HAP-1 (cell line): ENCODE measurements at regions of chr10 and their contacts with region 1.

Region 1: DNA sequence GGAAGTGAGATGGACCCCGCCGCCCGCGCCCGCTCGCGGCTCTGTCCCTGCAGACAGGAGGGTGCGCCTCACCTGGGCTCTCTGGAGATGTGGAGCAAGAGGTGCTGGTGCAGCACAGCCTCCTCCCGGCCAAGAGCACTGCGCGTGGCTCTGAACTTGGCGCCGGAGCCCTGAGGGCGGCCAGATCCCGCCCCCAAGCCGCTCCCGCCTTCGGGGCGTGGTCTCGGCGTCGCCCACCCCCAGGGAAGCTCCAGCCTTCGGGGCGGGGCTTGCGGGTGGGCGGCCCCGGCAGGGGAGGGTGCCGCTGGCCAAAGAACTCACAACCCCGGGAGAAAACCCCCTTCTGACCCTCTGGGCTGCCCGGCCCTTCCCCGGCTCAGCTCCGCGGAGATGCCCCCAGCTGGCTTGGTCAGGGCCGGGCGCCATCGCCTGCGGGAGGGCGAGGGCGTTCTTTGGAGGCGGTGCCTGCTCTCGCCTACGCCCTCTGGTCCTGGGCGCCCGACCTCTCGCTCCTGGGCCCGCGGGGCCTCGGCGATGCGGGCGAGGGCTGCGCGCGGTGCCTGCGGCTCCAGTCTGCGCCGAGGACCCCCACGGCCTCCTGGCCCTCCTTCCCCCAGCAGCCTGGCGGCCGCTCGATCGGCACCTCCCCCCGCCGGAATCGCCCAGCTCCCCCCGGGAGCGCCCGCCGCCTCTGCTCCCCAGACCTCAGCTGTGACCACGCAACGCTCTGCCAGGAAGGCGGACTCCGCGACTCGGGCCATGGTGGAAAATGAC is at the start of gene ZNF488:
- DNase-seq: peak; percentile 58 to 85
- H3K4me3 ChIP-seq: peak within 1 kb of the TSS; percentile 49
- H3K4me1 ChIP-seq: no peaks in the 10 kb centered on the region
- H3K27me3 ChIP-seq: peaks cover 4% of the 10 kb centered on the region

Region 2: DNA sequence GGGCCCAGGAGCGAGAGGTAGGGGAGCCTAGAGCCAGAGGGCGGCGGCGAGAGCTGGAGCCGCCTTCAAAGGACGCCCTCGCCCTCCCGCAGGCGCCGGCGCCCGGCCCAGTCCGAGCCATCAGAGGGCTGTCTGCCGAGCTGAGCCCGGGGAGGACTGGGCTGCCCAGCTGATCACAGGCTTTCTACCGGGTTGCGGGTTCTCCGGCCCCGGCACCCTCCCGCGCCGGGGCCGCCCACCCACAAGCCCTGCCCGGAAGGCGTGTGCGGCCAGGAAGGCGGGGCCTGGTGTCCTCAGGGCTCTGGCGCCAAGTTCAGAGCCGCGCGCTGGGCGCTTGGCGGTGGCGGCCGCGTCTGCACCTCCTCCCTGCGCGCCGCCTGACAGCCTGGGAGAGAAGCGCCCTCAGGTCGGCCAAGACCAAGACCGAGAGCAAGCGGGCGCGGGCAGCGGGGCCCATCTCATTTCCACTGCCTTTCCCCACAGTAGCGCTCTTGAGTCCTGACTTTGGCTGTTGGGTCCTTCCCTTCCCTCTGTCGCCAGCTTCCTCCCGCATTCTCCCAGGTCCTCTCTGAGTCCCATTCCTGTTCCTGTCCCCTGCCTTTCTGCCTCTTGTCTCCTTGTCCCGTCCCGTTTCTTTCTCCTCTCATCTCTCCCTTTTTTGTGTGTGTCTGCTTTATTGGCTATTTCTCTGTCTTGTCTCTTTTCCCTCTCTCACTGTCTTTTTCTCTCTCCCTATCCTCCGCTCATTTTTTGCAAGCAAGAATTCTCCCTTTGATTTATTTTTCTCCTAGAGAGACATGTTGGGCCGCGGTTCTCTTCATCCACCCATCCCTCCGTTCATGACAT is 1277.7 kb before region 1 on chr10:
- in situ Hi-C with region 1: loop called (anchors 5 kb)
- DNase-seq: peak; percentile 55 to 80
- H3K4me3 ChIP-seq: peak overlapping the region; percentile 42
- H3K4me1 ChIP-seq: peaks cover 7% of the 10 kb centered on the region; the same call in 1 of the 2 replicates
- H3K27me3 ChIP-seq: no peaks in the 10 kb centered on the region

Region 3: DNA sequence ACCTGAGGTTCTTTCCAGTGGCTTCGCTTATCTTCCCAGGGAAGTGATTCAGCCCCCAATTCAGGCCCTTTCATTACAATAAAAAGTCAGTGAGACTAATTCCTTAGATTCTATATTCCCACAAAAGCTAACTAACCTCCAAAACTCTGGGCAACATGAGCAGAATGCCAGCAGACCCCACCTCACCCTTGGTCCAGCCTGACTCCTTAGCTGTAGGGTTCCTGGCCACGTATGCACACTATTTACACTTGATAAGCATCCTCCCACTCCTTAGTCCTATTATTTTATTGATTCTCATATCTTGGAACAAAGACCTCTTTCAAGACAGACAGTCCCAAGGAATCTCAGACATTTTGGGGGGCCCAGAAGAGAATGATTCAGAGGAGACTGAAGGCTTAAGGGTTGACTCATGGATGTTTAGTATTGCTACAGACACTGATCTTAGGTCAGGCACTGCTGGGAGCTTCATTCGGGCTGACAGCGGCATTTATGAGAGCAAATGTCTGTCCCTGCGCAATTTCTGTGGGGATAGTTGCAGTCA is 247.0 kb before region 1 on chr10:
- in situ Hi-C with region 1: no loop called
- DNase-seq: no peak
- H3K4me3 ChIP-seq: no peak overlapping the region
- H3K4me1 ChIP-seq: no peaks in the 10 kb centered on the region
- H3K27me3 ChIP-seq: no peaks in the 10 kb centered on the region